ENCODE measurements at regions of chr19 and their contacts with region 1.

Region 1: GRCh38 chr19:38784224-38784623 is 4.8 kb upstream of the LGALS7B start:
- DNase-seq: no peak
- ATAC-seq: no peak
- H3K4me3 ChIP-seq: no peak overlapping the region
- H3K27ac ChIP-seq: no peak overlapping the region
- H3K4me1 ChIP-seq: no peaks in the 10 kb centered on the region
- H3K27me3 ChIP-seq: no peaks in the 10 kb centered on the region
- CTCF ChIP-seq: no peak

Region 2: GRCh38 chr19:38815059-38816001 is 31.1 kb after region 1 on chr19:
- intact Hi-C with region 1: loop called in 1 of 2 experiments (anchors 5 kb)
- DNase-seq: no peak
- ATAC-seq: peak in 1 of 4 donors; percentile 23
- H3K4me3 ChIP-seq: no peak overlapping the region
- H3K27ac ChIP-seq: no peak overlapping the region
- H3K4me1 ChIP-seq: peaks cover 12% of the 10 kb centered on the region
- H3K27me3 ChIP-seq: no peaks in the 10 kb centered on the region
- CTCF ChIP-seq: no peak

Measured in psoas muscle (tissue), 8 donors.